Activated T-helper 1 cell treated with anti-CD3 and anti-CD28 coated beads, Interleukin-12 subunit alpha, Interleukin-12 subunit beta, Interleukin-2, Interleukin-4 antibody, amounts not matched to agents 30 ng/mL and 10 ng/mL and 1 ng/mL, durations not matched to agents 14 hours and 24 hours and 36 hours (primary cell): ENCODE measurements at regions of chr5 and their contacts with region 1.

Region 1: DNA sequence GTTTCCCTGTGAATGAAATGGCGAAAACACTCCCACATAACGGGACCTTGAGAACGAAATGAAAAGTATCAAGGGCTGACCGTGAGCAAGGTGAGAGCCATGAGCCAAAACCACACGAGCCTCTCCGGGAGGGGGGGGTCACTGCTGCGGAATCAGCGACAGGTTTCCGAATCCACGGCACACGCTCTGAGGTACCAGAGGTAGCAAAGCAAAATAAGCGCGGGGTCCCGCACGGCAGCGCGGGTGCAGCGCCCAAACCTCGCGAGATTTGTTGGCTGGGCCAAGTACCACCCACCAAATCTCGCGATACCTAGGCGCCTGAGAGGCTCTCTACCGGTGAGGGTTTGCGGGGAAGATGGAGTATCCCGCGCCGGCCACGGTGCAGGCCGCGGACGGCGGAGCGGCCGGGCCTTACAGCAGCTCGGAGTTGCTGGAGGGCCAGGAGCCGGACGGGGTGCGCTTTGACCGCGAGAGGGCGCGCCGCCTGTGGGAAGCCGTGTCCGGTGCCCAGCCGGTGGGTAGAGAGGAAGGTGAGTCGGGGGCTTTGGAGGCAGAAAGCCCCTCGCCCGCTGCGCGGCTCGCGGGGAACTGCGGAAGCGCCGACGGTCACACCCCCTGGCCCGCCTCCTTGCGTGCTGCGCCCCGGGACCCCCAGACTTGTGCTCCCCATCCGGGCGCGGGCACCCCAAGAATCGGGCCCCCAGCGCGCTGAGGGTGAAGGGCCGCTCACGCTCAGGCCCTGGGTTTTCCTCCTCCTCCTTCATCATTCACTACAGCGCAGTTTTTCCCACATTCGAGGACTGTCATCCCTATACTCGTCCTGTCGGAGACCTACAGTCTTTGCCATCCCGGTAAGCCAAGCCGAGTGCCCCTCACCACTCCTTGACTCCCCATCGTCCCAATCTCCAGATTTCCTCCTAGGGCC is at the start of gene ZNF346:
- DNase-seq: peak; percentile 87
- H3K4me3 Mint-ChIP-seq: peak within 1 kb of the TSS; percentile 98
- H3K27ac Mint-ChIP-seq: peak within 1 kb of the TSS; percentile 94
- H3K4me1 Mint-ChIP-seq: peaks cover 37% of the 10 kb centered on the region
- H3K27me3 Mint-ChIP-seq: no peaks in the 10 kb centered on the region
- total RNA-seq, gene ZNF346: 31.6 and 32.9 TPM in 2 replicates

Region 2: GRCh38 chr5:176660860-176661641 is 361.6 kb before region 1 on chr5:
- intact Hi-C with region 1: loop called (anchors 2 kb)
- DNase-seq: peak; percentile 67
- H3K4me3 Mint-ChIP-seq: no peak overlapping the region
- H3K27ac Mint-ChIP-seq: no peak overlapping the region
- H3K4me1 Mint-ChIP-seq: peaks cover 32% of the 10 kb centered on the region
- H3K27me3 Mint-ChIP-seq: peaks cover 12% of the 10 kb centered on the region

Region 3: DNA sequence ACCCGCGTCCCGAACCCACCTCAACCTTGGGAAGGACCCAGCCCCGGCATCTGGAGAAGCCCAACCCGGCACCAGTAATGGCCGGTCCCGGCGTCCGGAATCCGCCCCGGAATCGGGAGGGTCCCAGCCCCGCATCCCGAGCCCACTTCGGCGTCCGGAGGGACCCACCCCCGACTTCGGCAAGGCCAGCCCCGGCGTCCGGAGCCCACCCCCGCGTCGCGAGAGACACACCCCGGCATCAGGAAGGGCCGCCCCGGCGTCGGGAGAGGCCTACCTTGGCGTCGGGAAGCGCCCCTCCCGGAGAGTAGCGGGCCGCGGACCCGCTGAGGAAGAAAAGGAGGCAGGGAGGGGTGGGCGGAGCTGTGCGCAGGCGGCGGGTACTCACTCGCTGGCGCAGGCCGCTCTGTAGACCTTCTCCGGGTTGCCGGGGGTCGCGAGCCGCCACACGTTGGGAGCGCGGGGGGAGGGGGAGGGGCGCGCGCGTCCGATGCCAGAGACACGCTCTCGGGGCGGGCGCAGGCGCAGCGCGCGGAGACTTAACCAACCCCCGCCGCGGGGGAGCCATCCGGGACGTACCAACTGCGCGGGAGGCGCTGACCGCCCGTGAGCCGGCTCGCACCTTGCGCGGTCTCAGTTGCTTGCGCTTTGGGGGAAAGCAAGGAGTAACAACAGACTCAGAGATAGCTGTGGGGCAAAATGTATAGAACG is 16.2 kb before region 1 on chr5 and contains the start of gene UIMC1:
- intact Hi-C with region 1: loop called (anchors 1 kb)
- DNase-seq: peak; percentile 91
- H3K4me3 Mint-ChIP-seq: peak within 1 kb of the TSS; percentile 96
- H3K27ac Mint-ChIP-seq: peak within 1 kb of the TSS; percentile 95
- H3K4me1 Mint-ChIP-seq: peaks cover 22% of the 10 kb centered on the region
- H3K27me3 Mint-ChIP-seq: no peaks in the 10 kb centered on the region
- total RNA-seq, gene UIMC1: 57.0 and 70.6 TPM in 2 replicates

Region 4: DNA sequence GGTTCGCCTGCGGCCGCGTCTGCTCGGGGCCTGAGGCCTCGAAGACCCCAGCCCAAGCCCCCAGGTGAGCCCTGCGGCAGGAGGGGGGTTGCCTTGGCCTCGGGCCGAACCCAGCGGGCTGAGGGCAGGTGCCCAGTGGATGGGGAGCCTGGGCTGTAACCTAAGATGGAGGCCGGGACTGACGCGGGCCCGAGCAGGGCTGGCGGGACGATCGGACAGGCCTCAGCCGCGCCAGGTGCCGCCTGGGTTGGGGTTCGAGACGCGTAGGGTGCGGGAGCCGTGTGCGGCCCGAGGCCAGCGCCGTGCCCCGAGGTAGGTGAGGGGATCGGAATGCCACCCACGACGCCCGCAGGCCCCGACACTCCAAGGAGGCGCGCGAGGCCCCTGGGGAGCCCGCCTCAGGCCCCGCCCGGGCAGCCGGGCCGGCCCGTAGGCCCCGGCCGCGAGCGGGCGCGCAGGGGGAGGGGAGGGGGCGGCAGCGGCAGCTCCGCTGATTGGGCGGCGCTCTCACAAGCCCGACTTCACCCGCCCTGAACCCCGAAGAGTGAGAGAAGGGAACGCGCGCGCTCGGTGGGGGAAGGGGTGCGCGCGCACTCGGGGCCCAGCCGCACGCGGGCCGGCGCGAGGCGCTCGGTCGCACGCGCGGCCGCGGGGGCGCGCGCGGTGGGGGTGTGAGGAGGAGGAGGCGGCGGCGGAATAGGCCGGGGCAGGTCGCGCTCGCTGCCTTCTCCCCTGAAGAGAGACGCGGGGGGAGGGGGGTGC is 110.6 kb after region 1 on chr5 and contains the start of gene NSD1:
- intact Hi-C with region 1: loop called (anchors 5 kb)
- DNase-seq: peak; percentile 90
- H3K4me3 Mint-ChIP-seq: peak within 1 kb of the TSS; percentile 93
- H3K27ac Mint-ChIP-seq: peak within 1 kb of the TSS; percentile 86
- H3K4me1 Mint-ChIP-seq: peaks cover 48% of the 10 kb centered on the region
- H3K27me3 Mint-ChIP-seq: no peaks in the 10 kb centered on the region
- total RNA-seq, gene NSD1: 108 and 112 TPM in 2 replicates

Region 5: DNA sequence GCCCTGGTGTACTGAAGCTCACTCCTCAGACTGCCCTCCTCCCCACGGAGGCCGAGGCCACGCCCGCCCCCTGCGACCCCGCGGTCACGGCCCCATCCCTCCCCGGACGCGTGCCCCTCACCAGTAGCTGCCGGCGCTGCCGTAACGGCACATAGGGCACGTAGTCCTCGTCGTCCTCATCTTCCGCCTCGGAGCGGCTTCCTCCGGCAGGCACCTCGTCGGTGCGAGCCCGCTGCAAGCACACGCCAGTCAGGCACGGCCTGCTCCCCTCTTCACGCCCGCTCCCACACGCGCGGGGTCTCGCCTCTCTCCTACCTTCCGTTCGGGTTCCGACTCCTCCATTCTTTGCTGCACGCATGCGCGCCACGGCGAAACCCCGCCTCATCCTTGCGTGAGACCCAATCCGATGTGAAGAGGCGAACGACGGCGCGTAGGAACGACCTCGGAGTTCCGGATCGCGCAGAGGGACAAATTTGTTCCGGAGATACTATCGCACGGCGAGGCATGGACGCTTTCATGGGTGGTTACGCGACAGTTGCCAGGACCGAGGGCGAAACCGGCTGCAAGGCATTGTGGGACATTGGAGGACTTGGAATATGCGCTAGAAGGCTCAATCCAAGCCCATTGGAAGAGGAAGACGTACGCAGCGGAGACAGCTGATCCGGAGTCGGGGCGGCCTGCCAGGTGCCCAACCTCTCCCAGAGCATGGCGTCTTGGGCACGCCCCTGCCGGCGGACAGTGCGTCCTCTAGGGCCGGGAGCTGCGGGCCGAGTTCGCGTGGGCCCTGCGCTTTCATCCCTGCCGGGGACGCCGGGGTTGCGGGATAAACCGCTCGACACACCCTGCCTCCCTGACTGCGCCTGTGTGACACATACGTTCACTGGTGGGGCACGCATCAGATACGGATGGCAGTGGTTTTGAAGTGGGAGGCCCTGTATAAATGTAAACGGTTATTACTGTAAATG is 494.2 kb after region 1 on chr5 and contains the start of gene DDX41:
- intact Hi-C with region 1: loop called (anchors 2 kb)
- DNase-seq: peak; percentile 96
- H3K4me3 Mint-ChIP-seq: peak within 1 kb of the TSS; percentile 91
- H3K27ac Mint-ChIP-seq: peak within 1 kb of the TSS; percentile 88
- H3K4me1 Mint-ChIP-seq: peaks cover 46% of the 10 kb centered on the region
- H3K27me3 Mint-ChIP-seq: no peaks in the 10 kb centered on the region
- total RNA-seq, gene DDX41: 151 and 166 TPM in 2 replicates

Region 6: DNA sequence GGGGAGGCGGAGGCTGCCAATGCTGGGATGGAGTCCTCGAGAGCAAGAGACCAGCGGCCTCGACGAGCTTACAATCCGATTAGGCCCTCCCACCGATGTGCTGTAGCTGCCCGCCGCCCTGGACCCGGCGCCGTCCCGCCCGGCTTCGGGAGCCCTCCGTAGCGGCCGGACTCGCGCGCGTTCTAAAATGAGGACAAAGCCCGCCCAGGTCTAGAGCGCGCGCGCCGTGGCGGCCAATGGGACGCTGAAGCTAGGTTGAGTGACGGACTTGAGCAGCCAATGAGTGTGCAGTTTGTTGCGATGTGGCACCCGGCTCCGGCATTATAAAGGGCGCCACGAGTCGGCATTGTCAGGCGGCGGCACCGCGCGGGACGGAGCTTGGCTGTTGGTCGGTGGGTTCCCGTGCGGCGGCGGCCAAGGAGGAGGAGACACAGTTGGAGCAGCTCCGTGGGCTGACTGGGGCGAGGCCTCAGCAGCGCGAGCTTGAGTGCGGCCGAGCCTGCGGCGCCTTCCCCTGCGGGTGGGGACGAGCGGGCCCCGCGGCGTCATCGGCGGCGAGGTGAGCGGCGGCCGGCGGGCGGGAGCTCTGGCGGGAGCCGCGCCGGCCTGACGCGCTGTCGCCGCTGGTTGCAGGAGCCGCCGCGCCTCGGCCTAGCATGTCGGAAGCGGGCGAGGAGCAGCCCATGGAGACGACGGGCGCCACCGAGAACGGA is 1181.7 kb after region 1 on chr5 and contains the start of gene HNRNPAB:
- intact Hi-C with region 1: loop called (anchors 10 kb)
- DNase-seq: peak; percentile 94
- H3K4me3 Mint-ChIP-seq: peak within 1 kb of the TSS; percentile 99
- H3K27ac Mint-ChIP-seq: peak within 1 kb of the TSS; percentile 100
- H3K4me1 Mint-ChIP-seq: peaks cover 35% of the 10 kb centered on the region
- H3K27me3 Mint-ChIP-seq: peaks cover 2% of the 10 kb centered on the region
- total RNA-seq, gene HNRNPAB: 459 and 472 TPM in 2 replicates